ENCODE measurements at regions of chr18 and their contacts with region 1.

Region 1: GRCh38 chr18:5456577-5457463 is 87.0 kb downstream of the EPB41L3 start:
- DNase-seq: no peak
- ATAC-seq: peak; percentile 46

Region 2: DNA sequence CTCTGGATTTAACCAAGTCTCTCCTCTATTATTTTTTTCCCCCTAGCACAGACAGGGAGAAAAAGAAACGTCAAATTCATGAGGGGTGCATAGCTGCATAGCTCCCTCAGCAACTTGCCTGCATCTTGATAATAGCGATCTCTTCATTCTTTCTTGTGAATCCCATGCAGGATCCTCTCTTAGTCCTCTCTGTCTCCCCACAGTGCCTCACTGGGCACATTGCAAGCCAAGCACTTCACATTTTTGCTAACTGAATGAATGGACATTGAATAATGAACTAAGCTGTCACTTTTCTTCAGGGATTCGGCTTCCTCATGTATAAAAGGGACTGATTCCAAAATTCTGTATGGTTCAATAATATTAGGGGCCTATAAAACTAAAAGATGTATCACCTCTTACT is 89.8 kb after region 1 on chr18:
- intact Hi-C with region 1: loop called in 1 of 2 experiments (anchors 5 kb)
- DNase-seq: no peak
- ATAC-seq: peak; percentile 52

Measured in left colon (tissue), 2 donors.